Mammary epithelial cell (primary cell): ENCODE measurements at regions of chr4 and their contacts with region 1.

Region 1: GRCh38 chr4:118270492-118270891 is 82.3 kb downstream of the PRSS12 start:
- DNase-seq: peak; percentile 30
- H3K4me3 ChIP-seq: no peak overlapping the region
- H3K27ac ChIP-seq: no peak overlapping the region
- H3K4me1 ChIP-seq: no peaks in the 10 kb centered on the region
- H3K27me3 ChIP-seq: no peaks in the 10 kb centered on the region
- CTCF ChIP-seq: peak; percentile 53 to 55

Region 2: DNA sequence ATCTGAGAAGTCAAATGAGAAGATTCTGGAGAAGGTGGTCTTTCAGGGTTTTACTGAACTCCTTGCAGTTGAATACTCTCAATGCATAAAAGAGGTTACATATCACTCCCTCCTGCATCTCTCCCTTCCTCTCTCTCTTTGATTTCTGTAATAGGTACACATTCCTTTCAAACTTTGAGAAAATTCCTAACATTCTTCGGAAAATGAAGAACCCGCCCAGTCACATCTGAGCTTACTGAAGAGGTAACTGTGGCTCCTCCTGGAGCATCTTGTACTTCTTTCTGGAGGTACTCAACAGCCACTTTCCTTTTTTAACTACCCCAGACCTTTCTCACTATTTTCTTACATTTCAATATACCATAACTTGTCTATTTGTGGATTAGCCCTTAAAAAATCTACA is 211.5 kb before region 1 on chr4:
- CTCF ChIA-PET with region 1: no interaction called
- dilution Hi-C with region 1: no loop called
- in situ Hi-C with region 1: no loop called
- intact Hi-C with region 1: no loop called
- DNase-seq: no peak
- H3K4me3 ChIP-seq: no peak overlapping the region
- H3K27ac ChIP-seq: no peak overlapping the region
- H3K4me1 ChIP-seq: no peaks in the 10 kb centered on the region
- H3K27me3 ChIP-seq: no peaks in the 10 kb centered on the region
- CTCF ChIP-seq: no peak

Region 3: DNA sequence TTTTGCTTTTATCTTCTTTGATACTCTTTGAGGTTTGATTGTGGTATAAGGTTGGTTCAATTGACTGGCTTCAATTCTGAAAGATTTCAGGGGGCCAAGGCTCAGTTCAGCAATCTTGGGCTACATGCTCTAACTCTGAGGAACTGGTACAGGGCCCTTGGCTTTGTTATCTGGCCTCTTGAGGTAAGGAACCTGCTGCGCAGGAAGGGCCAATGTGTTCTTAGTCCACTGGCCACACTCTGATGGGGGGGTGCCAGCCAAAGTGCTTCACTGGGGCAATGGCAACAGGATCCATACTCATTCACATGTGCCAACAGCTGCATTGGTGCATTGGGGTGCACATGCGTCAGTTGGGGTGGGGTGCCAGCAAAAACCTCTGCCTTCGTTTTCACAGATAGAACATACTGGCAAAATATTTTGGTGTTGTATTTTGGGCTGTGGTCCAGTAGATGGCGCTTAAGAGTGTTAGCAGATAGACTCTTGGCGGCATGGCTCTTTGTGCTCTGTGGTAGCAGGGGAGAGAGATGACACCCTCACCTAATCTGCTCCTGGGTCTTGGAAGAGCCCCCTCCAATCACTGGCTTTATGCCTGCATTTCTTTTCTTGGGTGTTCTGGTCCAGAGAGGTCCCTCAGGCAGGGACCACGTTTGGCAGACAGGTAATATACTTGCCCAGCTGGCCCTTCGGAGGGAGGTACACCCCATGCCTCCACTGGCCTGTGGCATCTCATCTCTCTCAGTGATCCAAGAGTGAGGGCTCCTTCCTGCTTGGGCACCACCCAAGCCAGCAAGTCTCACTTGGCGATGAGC is 193.3 kb before region 1 on chr4:
- CTCF ChIA-PET with region 1: no interaction called
- dilution Hi-C with region 1: no loop called
- in situ Hi-C with region 1: no loop called
- intact Hi-C with region 1: loop called (anchors 2 kb)
- DNase-seq: peak; percentile 13
- H3K4me3 ChIP-seq: no peak overlapping the region
- H3K27ac ChIP-seq: no peak overlapping the region
- H3K4me1 ChIP-seq: no peaks in the 10 kb centered on the region
- H3K27me3 ChIP-seq: no peaks in the 10 kb centered on the region
- CTCF ChIP-seq: peak; percentile 61 to 78

Region 4: DNA sequence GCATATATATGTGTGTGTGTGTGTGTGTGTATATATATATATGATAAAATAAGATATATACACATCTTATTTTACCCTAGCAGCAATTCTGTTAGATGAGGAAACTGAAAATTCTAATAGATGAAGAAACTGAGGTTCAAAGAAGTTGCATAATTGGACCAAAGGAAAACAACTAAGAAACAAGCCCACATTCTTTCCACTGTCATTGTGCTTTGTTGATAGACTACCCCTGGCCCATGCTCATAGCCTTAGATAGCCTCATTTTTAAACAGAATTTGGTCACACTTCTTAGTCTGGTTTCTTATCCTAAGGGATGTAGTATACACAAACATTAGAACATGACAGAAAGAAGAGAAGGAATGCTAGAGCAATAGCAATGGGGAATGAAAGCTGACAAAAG is 97.4 kb before region 1 on chr4:
- CTCF ChIA-PET with region 1: no interaction called
- dilution Hi-C with region 1: no loop called
- in situ Hi-C with region 1: no loop called
- intact Hi-C with region 1: no loop called
- DNase-seq: no peak
- H3K4me3 ChIP-seq: no peak overlapping the region
- H3K27ac ChIP-seq: no peak overlapping the region
- H3K4me1 ChIP-seq: peaks cover 28% of the 10 kb centered on the region
- H3K27me3 ChIP-seq: no peaks in the 10 kb centered on the region
- CTCF ChIP-seq: no peak

Region 5: GRCh38 chr4:118224239-118224829 is 46.2 kb before region 1 on chr4:
- CTCF ChIA-PET with region 1: no interaction called
- dilution Hi-C with region 1: no loop called
- in situ Hi-C with region 1: no loop called
- intact Hi-C with region 1: loop called (anchors 5 kb)
- DNase-seq: peak; percentile 40
- H3K4me3 ChIP-seq: no peak overlapping the region
- H3K27ac ChIP-seq: no peak overlapping the region
- H3K4me1 ChIP-seq: no peaks in the 10 kb centered on the region
- H3K27me3 ChIP-seq: no peaks in the 10 kb centered on the region
- CTCF ChIP-seq: peak; percentile 52 to 60